Stomach (tissue), 19 donors: ENCODE measurements at regions of chr10 and their contacts with region 1.

Region 1: GRCh38 chr10:72215652-72216549 is at the starts of genes ANAPC16 and ASCC1:
- DNase-seq: peak; percentile 90 to 98
- H3K4me3 ChIP-seq: peak within 1 kb of the TSS; percentile 57 to 69 (median 62)
- H3K27ac ChIP-seq: peak within 1 kb of the TSS; percentile 91 to 100 (median 96)
- H3K4me1 ChIP-seq: peaks cover 39 to 68% (median 54%) of the 10 kb centered on the region in 4 donors
- H3K27me3 ChIP-seq: no peaks in the 10 kb centered on the region
- CTCF ChIP-seq: peak in 1 of 7 experiments; percentile 16
- EP300 ChIP-seq: no peak
- POLR2A ChIP-seq: peak in 2 of 4 donors; percentile 63 to 85
- total RNA-seq, gene ANAPC16: 12.7 to 104 (median 68.8) TPM
- total RNA-seq, gene ASCC1: 4.3 to 142 (median 19.4) TPM

Region 2: DNA sequence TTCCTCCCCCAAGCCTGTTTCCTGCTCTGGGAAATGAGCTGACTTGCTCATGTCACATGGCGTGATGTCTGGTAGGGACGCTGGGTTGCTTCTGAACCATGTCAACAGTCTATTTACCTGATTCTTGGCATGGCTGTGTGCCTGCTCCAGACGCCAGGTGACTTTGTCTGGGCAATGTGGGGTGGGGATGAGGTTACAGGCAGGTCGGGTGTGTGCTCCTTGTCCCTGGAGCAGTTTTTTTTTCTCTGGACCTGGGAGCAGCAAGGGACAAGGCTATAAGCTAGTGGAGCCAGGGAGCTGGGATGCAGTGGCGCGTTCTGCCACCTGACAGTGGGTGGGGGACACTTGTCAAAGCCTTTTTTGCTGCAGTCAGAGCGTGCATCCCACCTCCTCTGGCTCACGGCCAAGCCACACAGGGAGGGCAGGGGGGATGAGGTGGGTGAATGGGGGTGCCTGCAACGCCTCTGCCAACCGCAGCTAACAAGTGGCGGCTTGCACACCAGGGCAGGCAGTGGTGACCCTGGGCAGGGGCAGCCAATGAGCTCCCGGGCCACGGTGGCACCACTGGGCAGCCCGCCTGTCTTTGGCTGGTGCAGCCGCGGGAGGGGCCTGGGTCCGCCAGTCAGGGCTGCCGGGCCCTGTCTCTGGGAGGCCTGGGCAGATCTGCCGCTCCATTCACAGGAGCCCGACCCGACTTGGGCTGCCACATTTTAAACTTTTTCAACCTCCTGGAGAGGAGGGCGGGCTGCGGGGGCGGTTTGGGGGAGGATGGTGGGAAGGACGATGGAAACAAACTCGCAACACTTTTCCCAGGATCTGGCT is 115.9 kb after region 1 on chr10:
- intact Hi-C with region 1: loop called (anchors 10 kb)
- DNase-seq: peak; percentile 91 to 96
- H3K4me3 ChIP-seq: peak overlapping the region in 2 of 4 donors; percentile 4 to 14
- H3K27ac ChIP-seq: peak overlapping the region; percentile 84 to 97 (median 95)
- H3K4me1 ChIP-seq: peaks cover 92 to 100% (median 98%) of the 10 kb centered on the region in 4 donors
- H3K27me3 ChIP-seq: no peaks in the 10 kb centered on the region
- CTCF ChIP-seq: peak in 5 of 7 experiments; percentile 37 to 80 (median 50)
- EP300 ChIP-seq: no peak
- POLR2A ChIP-seq: no peak